Aorta (tissue), 5 donors: ENCODE measurements at regions of chr7 and their contacts with region 1.

Region 1: DNA sequence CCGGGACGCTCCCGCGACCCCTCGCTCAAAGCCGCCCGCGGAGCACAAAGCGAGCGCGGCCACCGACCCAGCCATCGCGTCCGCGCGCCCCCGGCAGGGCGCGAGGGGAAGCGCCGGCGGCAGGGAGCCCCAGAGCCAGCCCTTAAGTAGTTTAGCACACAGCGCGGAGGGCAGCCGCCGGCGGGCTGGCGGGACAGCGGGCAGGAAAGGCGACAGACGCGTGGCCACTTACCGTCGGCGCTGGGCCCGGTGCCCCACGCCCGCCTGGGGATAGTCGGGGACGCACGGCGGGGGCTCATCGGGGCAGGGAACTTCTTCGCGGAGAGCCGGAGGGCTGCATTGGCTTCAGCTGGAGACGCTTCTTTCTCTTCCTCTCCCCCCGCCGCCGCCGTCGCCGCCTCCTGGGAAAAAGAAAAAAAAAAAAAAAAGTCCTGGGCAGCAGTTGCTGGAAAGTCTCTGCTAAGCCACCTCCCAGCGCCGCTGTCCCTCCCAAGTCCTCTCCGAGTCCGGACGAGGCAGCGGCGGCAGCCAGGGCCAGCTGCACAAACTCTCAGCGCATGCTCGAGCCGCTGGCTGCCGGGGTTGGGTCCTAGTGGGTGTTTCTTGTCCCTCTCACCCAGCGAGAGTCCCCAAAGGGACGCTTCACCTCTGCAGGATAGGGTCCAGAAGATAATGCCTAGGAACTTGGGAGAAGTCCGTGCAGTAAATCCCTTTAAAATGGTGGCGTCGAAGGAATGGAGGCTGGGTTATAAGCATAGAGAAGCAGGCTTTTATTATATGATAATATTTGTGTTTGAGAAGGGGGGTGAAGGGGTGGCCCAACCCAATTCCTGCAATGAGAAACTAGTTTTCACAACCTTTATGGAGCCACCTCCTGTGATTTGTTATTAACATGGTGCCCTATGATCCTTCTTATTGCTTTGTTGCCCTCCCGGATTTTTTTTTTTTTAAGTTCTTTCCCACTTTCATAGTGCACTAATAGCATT is at the start of gene TSPAN12:
- DNase-seq: peak; percentile 91 to 95
- ATAC-seq: peak; percentile 96
- H3K4me3 ChIP-seq: peak within 1 kb of the TSS; percentile 75 to 81
- H3K27ac ChIP-seq: peak within 1 kb of the TSS; percentile 73 to 83
- H3K4me1 ChIP-seq: no peaks in the 10 kb centered on the region
- H3K27me3 ChIP-seq: no peaks in the 10 kb centered on the region
- total RNA-seq, gene TSPAN12: 13.4 to 14.3 TPM

Region 2: DNA sequence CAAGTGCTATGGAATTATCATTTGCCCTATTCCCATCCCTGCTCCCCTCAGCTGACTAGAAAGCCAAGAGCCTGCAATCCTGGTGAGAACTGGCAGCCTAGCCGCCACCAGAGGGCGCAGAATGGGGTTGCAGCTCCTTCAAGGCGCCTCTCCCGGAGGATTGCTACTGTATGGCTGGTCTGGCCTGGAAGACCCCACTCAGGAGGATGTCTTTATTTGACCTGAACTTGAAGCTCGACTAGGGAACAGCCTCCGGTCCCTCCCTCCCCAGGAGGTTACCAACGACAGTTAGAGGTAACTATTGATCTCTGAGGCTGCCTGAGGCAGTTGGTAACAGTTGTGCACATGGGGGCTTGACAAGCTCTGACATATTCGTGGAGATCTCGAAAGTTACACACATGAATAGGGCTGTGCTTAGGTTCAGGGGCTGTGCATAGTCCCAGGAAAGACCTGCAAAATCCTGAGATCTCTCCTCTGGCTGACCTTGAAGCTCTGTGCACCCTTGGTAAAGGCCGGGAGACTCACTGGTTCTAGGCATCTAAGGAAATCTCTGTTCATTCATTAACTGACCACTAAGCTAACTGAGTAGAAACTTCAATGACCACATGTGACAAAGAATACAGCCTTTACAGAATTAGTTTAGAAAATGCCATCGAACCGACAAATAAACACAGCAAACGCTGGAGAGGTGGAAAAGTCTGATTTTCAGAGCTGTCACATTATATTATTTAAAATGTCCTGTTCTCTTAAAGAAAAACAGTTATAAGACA is 65.6 kb before region 1 on chr7:
- intact Hi-C with region 1: loop called in 1 of 2 experiments (anchors 5 kb)
- DNase-seq: peak; percentile 80 to 94
- ATAC-seq: peak; percentile 83
- H3K4me3 ChIP-seq: no peak overlapping the region
- H3K27ac ChIP-seq: no peak overlapping the region
- H3K4me1 ChIP-seq: no peaks in the 10 kb centered on the region
- H3K27me3 ChIP-seq: no peaks in the 10 kb centered on the region

Region 3: DNA sequence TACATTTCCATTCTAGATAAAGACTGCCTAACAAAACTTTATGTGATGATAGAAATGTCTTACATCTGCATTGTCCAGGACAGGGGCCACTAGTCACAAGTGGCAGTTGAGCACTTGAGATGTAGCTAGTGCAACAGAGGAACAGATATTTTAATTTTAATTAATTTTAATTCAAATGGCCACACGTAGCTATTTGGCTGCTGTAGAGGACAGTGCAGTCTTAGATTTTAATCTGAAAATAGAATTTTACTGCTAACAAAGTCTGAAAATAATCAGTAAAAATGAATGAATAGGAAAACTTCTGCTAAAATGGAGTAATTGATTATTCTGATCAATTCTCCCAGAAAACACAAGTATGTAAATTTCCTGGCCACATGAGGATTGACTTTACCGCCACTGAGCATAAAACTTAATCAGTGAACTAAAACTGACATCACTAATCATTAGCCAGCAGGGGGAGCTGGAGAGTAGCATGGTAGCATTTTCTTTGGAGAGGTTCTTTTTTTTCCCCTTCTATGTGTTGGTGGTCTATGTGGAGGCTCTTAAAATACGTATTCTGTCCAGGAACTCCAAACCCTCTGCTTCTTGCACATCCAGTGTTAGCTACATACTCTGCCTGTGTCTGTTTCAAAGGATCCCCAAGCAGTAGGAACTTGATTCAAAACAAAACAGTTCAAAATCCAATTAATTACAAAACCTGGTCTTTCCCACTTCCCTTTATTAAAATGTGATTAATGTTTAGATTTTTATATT is 52.1 kb before region 1 on chr7:
- intact Hi-C with region 1: loop called (anchors 5 kb)
- DNase-seq: no peak
- ATAC-seq: peak; percentile 85
- H3K4me3 ChIP-seq: no peak overlapping the region
- H3K27ac ChIP-seq: no peak overlapping the region
- H3K4me1 ChIP-seq: no peaks in the 10 kb centered on the region
- H3K27me3 ChIP-seq: no peaks in the 10 kb centered on the region

Region 4: DNA sequence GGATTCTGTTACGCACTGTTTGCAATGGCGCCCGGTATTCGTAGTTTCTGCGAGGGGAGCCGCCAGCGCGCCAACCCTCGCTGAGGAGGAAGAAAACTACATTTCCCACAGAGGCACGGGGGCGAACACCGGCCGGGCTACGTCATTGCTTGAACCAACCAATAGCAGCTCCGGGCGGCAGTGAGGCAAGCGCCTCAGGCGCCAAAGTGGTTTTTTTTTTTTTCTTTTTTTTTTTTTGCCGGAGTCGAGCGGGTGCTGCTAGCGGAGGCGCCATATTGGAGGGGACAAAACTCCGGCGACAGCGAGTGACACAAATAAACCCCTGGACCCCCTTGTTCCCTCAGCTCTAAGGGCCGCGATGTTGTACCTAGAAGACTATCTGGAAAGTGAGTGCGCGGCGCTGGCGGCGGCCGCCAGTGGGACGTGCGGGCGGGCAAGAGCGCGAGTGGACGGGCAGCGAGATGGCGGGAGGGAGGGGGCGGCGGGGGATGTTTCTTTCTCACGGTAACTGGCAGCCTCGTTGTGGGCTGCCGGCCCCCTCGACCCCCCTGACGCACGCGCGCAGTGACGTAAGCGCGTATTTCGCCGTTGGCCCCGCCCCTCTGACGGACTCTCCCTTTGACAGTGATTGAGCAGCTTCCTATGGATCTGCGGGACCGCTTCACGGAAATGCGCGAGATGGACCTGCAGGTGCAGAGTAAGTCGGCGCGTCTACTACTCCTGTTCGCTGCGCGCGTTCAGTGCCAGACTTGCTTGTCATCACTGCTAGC is 92.8 kb after region 1 on chr7 and contains the start of gene ING3:
- intact Hi-C with region 1: loop called (anchors 2 to 5 kb)
- DNase-seq: peak; percentile 98
- ATAC-seq: peak; percentile 99
- H3K4me3 ChIP-seq: peak within 1 kb of the TSS; percentile 85 to 94
- H3K27ac ChIP-seq: peak within 1 kb of the TSS; percentile 80 to 99
- H3K4me1 ChIP-seq: peaks cover 0 to 3% of the 10 kb centered on the region in 2 donors
- H3K27me3 ChIP-seq: no peaks in the 10 kb centered on the region
- total RNA-seq, gene ING3: 15.9 to 16.0 TPM